Head of caudate nucleus (tissue), 42 donors: ENCODE measurements at regions of chr17 and their contacts with region 1.

Region 1: DNA sequence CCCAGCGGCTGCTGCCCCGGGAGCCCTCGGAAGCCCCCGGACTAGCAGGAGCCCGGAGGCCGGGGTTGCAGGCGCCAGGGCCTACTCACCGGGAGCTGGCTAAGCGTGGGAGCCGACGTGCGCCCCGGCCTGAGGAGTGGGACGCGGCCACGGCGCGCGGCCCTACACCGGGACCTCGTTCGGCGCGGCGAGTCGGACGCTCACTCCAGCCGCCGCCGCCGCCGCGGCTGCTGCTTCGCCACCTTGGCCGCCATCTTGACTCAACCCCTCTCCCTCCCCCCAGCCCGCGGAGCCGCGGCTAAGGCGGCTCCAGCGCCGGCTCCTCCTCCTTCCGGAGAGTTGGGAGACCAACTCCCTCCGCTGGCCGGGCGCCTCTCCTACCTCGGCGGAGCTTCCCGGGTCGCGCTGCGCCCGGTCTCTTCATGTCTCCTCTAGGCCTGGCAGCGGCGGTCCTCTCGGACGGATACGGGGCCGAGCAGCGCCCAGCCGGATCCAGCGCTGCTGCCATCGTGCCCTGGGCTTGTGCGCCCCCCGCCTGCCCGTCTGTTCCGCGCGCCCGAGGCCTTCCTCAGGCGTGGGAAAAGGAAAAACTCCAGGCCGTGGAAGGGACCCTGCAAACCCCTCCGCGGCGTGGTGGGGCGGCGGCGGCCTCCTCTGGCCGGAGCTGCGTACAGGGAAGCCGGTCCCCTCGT is at the start of gene NCOR1:
- DNase-seq: peak; percentile 71 to 97 (median 92)

Region 2: GRCh38 chr17:15999439-16000350 is 215.7 kb before region 1 on chr17 and contains the starts of genes TTC19 and ZSWIM7:
- intact Hi-C with region 1: loop called (anchors 5 kb)
- DNase-seq: peak; percentile 94 to 100 (median 99)

Region 3: DNA sequence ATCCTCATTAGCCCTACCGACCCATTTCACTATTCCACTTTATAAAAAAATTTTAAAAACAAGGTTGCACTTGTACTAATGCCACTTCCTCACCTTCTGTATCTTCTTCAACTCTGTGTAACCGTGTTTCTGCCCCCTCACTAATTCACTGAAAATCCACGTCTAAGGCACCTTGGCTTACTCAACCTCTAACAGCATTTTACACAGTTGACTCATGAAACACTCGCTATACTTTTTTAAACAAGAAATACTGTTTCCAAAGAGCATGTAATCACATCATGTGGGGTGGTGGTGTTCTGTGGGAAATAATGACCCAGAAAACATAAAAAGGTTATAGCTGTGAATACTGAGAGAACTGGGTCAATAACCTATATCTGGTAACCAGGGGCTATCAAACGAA is 80.0 kb before region 1 on chr17:
- intact Hi-C with region 1: no loop called
- DNase-seq: peak in 1 of 42 donors; percentile 7